Aorta (tissue), 5 donors: ENCODE measurements at regions of chr1 and their contacts with region 1.

Region 1: DNA sequence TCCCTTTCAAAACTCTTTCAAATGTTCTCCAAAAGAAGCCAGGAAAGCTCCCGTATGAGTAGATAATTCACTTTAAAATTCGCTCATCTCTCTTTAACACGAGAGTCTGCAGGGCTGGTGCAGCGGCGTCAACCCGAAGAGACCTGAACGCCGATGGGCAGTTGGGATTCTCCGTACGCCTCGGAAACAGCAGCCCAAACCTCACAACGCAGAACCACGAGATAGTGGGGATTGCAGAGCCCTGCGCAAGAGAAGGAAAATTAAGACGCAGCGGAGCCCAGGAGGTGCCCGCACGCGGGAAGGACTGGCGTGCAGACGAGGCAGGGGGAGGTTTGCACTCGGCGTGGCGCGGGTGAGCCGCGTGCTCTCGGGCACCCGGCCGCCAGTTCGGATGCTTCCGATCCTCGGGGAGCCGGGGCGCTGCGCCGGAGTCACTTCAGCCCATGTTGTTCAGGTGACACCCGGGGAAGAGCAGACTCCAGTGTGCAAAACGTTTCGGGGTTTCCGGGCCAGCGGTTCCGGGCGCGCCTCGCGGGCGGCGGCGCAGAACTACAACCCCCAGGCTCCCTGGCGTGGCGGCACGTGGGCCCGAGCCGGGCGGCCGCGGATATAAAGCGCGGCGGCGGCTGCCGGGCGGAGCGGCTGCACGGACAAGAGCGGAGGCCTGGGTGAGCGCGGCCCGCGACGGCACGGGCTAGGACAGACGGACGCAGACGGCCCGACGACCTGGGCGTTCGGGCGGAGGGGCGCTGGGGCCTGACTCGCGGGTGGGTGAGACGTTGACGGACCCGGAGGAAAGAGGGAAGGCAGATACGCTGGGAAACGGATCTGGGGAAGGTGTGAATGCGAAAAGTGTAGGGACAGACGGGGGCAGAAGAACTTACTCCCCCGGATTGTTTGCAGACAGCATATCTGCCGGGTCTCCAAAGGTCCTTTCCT is at the start of gene NPL:
- DNase-seq: peak; percentile 92 to 95
- ATAC-seq: peak; percentile 97
- H3K4me3 ChIP-seq: peak within 1 kb of the TSS; percentile 49 to 59
- H3K27ac ChIP-seq: no peak within 1 kb of the TSS
- H3K4me1 ChIP-seq: no peaks in the 10 kb centered on the region
- H3K27me3 ChIP-seq: no peaks in the 10 kb centered on the region
- total RNA-seq, gene NPL: 16.1 to 36.6 TPM

Region 2: DNA sequence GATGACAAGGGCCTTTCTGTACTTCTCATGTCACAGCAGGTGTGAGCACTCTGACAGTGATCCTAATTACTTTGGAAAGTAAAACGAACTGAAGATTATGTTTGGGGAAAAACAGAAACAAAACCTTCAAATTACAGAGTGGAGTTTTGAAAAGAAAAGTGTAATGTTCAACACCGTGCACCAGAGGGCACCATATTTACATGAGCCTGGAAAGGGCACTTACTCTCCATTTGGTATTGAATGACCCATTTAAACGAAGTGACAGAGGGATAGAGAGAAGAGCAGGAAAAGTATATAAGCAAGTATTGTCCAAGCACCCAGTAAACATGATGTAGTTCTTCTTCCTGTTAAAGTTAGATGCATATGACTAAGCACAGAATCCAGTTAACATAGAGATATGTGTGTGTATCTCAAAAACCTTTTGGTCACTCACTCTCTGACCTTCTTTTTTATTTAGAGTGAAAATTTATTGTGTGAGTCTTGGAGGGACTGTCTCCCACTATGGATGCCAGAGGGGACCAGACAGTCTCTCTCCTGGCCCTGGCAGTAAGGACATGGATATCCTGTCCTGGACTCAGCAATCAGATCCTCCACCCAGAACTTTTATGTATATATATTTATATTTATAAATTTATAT is 343.3 kb before region 1 on chr1:
- intact Hi-C with region 1: loop called in 1 of 2 experiments (anchors 5 kb)
- DNase-seq: no peak
- ATAC-seq: no peak
- H3K4me3 ChIP-seq: no peak overlapping the region
- H3K27ac ChIP-seq: no peak overlapping the region
- H3K4me1 ChIP-seq: no peaks in the 10 kb centered on the region
- H3K27me3 ChIP-seq: no peaks in the 10 kb centered on the region

Region 3: GRCh38 chr1:182677397-182678098 is 111.9 kb before region 1 on chr1:
- intact Hi-C with region 1: loop called in 1 of 2 experiments (anchors 10 kb)
- DNase-seq: no peak
- ATAC-seq: no peak
- H3K4me3 ChIP-seq: no peak overlapping the region
- H3K27ac ChIP-seq: no peak overlapping the region
- H3K4me1 ChIP-seq: peaks cover 0 to 1% of the 10 kb centered on the region in 2 donors
- H3K27me3 ChIP-seq: no peaks in the 10 kb centered on the region

Region 4: DNA sequence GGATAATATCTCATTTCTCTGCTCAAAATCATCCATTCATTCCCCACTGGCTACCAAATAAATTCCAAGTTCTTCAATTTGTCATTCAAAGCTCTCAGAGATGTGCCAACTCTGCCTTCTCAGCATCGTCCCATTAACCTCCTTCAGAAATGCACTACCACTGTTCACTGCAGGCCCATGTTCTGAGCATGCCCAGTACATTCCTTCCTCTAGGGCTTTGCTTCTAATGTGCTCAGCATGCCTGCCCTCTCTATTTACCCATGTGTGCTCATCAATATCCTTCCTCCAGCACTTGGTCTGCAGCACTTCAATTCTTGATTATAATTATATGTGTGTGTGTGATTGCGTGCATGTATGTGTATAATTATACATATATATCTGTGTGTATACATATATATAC is 68.9 kb before region 1 on chr1:
- intact Hi-C with region 1: no loop called
- DNase-seq: no peak
- ATAC-seq: no peak
- H3K4me3 ChIP-seq: no peak overlapping the region
- H3K27ac ChIP-seq: no peak overlapping the region
- H3K4me1 ChIP-seq: no peaks in the 10 kb centered on the region
- H3K27me3 ChIP-seq: no peaks in the 10 kb centered on the region